ENCODE measurements at regions of chrX and their contacts with region 1.

Region 1: DNA sequence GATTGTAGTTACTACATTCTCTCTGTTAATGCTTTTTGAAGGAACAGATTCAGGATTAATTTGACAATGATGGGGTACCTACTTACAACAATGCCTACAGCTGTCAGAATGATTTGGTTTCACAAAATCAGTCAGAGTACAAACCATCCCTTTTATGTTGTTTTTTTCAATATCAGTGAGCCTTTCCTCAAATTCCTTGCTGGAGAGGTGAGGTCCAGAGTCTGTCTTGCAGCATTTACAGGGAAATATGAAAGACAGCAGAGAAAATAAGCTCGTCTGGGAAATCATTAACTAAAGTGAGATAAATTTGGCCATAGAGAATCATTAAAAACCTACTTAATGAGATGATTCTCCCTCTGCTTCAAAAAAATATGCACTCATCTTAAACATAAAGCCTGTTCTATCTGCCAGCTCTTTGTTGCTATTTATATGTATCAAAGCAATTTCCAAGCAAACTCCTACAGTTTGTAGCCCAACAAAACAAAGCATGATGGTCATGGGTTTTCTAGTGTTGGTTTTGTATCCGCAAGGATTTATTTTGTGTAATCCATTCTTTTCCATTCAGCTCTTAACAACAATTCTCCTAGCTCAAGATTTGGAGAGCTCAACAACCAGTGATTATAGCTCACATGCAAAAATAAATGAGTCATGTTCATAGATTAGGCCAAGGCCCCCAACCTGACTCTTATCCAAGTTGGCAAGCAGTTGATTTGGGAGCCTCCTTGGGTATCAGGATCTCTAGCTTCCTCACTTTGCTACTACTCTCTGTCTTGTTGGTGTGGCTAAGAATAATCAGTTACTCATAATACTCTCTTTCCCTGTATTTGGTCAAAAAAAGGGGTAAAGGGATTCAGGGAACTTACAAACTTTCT is 222.6 kb downstream of the ENOX2 start:
- DNase-seq: no peak
- ATAC-seq: no peak
- H3K4me3 ChIP-seq: no peak overlapping the region
- H3K27ac ChIP-seq: no peak overlapping the region
- H3K4me1 ChIP-seq: no peaks in the 10 kb centered on the region
- H3K27me3 ChIP-seq: no peaks in the 10 kb centered on the region
- CTCF ChIP-seq: no peak

Region 2: GRCh38 chrX:130625386-130625785 is 55.0 kb before region 1 on chrX:
- CTCF ChIA-PET with region 1: no interaction called
- POLR2A ChIA-PET with region 1: interaction called, 13 read pairs
- in situ Hi-C with region 1: no loop called
- intact Hi-C with region 1: no loop called
- DNase-seq: no peak
- ATAC-seq: no peak
- H3K4me3 ChIP-seq: no peak overlapping the region
- H3K27ac ChIP-seq: no peak overlapping the region
- H3K4me1 ChIP-seq: no peaks in the 10 kb centered on the region
- H3K27me3 ChIP-seq: no peaks in the 10 kb centered on the region
- CTCF ChIP-seq: no peak